Colonic mucosa (tissue), 4 donors: ENCODE measurements at regions of chr1 and their contacts with region 1.

Region 1: DNA sequence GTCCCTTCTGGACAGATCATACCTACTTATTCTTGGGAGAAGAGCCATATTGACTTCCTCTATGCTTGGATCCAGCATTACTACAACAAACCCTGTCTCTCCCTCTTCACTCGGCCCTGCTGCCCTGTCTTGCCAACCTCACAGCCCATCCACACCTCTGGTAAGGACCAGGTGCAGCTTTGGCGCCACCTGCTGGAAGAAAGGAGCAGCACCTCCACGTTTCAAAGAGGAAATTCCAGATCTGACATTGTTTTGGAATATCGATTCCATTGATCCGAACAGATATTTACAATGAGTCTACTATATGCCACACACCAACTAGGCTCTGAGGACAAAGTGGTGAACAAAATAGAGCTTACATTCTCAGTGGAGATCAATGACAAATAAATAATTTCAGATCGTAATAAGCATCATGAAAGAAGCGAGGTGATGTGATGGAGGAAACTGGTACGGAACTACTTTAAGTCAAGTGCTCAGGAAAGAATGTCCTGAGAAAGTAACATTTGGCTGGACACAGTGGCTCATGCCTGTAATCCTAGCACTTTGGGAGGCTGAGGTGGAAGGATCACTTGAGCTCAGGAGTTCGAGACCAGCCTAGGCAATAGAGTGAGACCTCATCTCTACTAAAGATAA is 18.7 kb downstream of the MFSD2A start:
- DNase-seq: peak; percentile 86
- H3K4me3 ChIP-seq: no peak overlapping the region
- H3K27ac ChIP-seq: no peak overlapping the region
- H3K4me1 ChIP-seq: no peaks in the 10 kb centered on the region
- H3K27me3 ChIP-seq: no peaks in the 10 kb centered on the region
- CTCF ChIP-seq: peak; percentile 99

Region 2: DNA sequence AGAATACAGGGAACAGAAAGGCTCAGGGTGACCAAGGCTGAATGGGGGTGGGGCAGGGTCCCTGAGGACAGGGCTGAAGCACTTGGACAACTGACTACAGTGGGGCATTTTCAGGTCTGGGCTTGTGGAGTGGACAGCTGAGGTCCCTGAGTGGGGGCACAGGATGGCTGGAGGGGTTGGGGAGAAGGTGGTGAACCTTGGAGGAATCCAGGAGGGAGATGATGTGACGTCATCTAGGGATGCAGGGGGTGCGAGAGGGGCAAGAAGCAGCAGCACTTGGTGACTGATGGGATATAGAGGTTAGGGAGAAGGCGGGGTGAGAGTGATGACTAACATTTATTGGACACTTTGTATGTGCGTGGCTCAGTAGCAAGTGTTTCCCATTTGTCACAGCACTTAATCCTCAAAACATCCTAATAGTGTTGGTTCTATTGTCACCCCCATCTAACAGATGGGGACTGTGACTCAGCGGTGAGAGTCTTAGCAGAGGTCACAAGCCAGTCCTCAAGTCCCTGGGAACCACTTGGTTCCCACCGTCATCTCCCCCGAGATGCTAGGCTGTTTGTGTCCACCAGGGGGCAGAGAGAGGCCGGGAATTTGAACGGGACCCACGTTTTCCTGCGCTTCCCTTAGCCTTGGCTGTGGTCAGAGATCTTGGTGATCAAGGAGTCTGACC is 157.1 kb before region 1 on chr1:
- intact Hi-C with region 1: loop called (anchors 2 kb)
- DNase-seq: peak; percentile 82
- H3K4me3 ChIP-seq: no peak overlapping the region
- H3K27ac ChIP-seq: no peak overlapping the region
- H3K4me1 ChIP-seq: peaks cover 12% of the 10 kb centered on the region
- H3K27me3 ChIP-seq: no peaks in the 10 kb centered on the region
- CTCF ChIP-seq: peak; percentile 69

Region 3: GRCh38 chr1:39852214-39852791 is 121.3 kb before region 1 on chr1:
- intact Hi-C with region 1: no loop called
- DNase-seq: no peak
- H3K4me3 ChIP-seq: no peak overlapping the region
- H3K27ac ChIP-seq: no peak overlapping the region
- H3K4me1 ChIP-seq: no peaks in the 10 kb centered on the region
- H3K27me3 ChIP-seq: no peaks in the 10 kb centered on the region
- CTCF ChIP-seq: no peak

Region 4: GRCh38 chr1:39919545-39919944 is 54.1 kb before region 1 on chr1:
- intact Hi-C with region 1: loop called (anchors 2 kb)
- DNase-seq: peak; percentile 48
- H3K4me3 ChIP-seq: no peak overlapping the region
- H3K27ac ChIP-seq: no peak overlapping the region
- H3K4me1 ChIP-seq: no peaks in the 10 kb centered on the region
- H3K27me3 ChIP-seq: no peaks in the 10 kb centered on the region
- CTCF ChIP-seq: peak; percentile 54

Region 5: GRCh38 chr1:40032240-40032891 is 58.7 kb after region 1 on chr1:
- intact Hi-C with region 1: loop called (anchors 5 kb)
- DNase-seq: peak; percentile 74
- H3K4me3 ChIP-seq: no peak overlapping the region
- H3K27ac ChIP-seq: no peak overlapping the region
- H3K4me1 ChIP-seq: peaks cover 3% of the 10 kb centered on the region
- H3K27me3 ChIP-seq: no peaks in the 10 kb centered on the region
- CTCF ChIP-seq: peak; percentile 59